Activated CD4-positive, alpha-beta T cell treated with anti-CD3 and anti-CD28 coated beads for 36 hours (primary cell): ENCODE measurements at regions of chr10 and their contacts with region 1.

Region 1: DNA sequence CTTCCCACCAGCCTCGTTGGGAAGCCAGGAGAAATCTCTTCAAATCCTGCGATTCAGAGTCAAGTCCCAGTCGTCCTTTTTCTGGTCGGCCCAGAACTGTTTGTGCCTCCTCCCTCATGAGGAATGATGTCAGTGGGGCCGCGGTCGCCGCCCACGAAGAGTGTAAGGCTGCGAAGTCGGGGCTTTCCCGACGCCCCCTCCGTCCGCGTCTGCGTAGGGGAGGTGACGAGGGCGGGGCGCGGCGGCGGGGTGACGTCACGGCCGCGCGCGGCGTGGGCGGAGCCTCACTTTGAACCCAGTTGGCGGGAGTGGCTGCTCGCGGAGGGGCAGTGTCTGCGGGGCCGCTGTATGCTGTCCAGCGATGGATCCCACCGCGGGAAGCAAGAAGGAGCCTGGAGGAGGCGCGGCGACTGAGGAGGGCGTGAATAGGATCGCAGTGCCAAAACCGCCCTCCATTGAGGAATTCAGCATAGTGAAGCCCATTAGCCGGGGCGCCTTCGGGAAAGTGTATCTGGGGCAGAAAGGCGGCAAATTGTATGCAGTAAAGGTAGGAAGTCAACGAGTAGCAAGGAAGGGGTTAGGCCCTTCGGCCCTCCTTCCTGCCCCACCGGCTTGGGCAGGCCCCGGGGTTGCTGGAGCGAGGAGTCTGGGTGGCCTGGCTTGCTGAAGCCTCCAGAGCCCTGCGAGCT is at the start of gene MASTL:
- DNase-seq: peak; percentile 97
- ATAC-seq: peak; percentile 77
- H3K4me3 Mint-ChIP-seq: peak within 1 kb of the TSS; percentile 94
- H3K27ac Mint-ChIP-seq: peak within 1 kb of the TSS; percentile 99
- H3K4me1 Mint-ChIP-seq: peaks cover 34% of the 10 kb centered on the region
- H3K27me3 Mint-ChIP-seq: no peaks in the 10 kb centered on the region
- total RNA-seq, gene MASTL: 42.1 to 55.3 TPM

Region 2: GRCh38 chr10:26437637-26438461 is 717.4 kb before region 1 on chr10 and contains the start of gene APBB1IP:
- CTCF ChIA-PET with region 1: no interaction called
- POLR2A ChIA-PET with region 1: no interaction called
- intact Hi-C with region 1: loop called in 1 of 2 experiments (anchors 5 kb)
- DNase-seq: peak; percentile 73
- ATAC-seq: peak; percentile 56
- H3K4me3 Mint-ChIP-seq: peak within 1 kb of the TSS; percentile 89
- H3K27ac Mint-ChIP-seq: peak within 1 kb of the TSS; percentile 97
- H3K4me1 Mint-ChIP-seq: peaks cover 49% of the 10 kb centered on the region
- H3K27me3 Mint-ChIP-seq: no peaks in the 10 kb centered on the region
- total RNA-seq, gene APBB1IP: 53.3 to 66.4 TPM

Region 3: GRCh38 chr10:26860443-26861204 is 294.6 kb before region 1 on chr10 and contains the start of gene ABI1:
- CTCF ChIA-PET with region 1: interaction called, 7 read pairs
- POLR2A ChIA-PET with region 1: no interaction called
- intact Hi-C with region 1: loop called (anchors 1 kb)
- DNase-seq: peak; percentile 99
- ATAC-seq: peak; percentile 95
- H3K4me3 Mint-ChIP-seq: peak within 1 kb of the TSS; percentile 98
- H3K27ac Mint-ChIP-seq: peak within 1 kb of the TSS; percentile 98
- H3K4me1 Mint-ChIP-seq: peaks cover 30% of the 10 kb centered on the region
- H3K27me3 Mint-ChIP-seq: no peaks in the 10 kb centered on the region
- total RNA-seq, gene ABI1: 44.2 to 56.6 TPM

Region 4: GRCh38 chr10:26969145-26969926 is 185.9 kb before region 1 on chr10:
- CTCF ChIA-PET with region 1: no interaction called
- POLR2A ChIA-PET with region 1: no interaction called
- intact Hi-C with region 1: no loop called
- DNase-seq: peak; percentile 24
- ATAC-seq: peak; percentile 88
- H3K4me3 Mint-ChIP-seq: no peak overlapping the region
- H3K27ac Mint-ChIP-seq: no peak overlapping the region
- H3K4me1 Mint-ChIP-seq: peaks cover 16% of the 10 kb centered on the region
- H3K27me3 Mint-ChIP-seq: no peaks in the 10 kb centered on the region

Region 5: GRCh38 chr10:27241652-27242472 is 86.7 kb after region 1 on chr10:
- CTCF ChIA-PET with region 1: interaction called, 3 read pairs
- POLR2A ChIA-PET with region 1: interaction called, 10 read pairs
- intact Hi-C with region 1: loop called (anchors 1 kb)
- DNase-seq: peak; percentile 94
- ATAC-seq: peak; percentile 71
- H3K4me3 Mint-ChIP-seq: peak overlapping the region; percentile 98
- H3K27ac Mint-ChIP-seq: peak overlapping the region; percentile 100
- H3K4me1 Mint-ChIP-seq: peaks cover 28% of the 10 kb centered on the region
- H3K27me3 Mint-ChIP-seq: no peaks in the 10 kb centered on the region

Region 6: GRCh38 chr10:27914888-27915287 is 759.7 kb after region 1 on chr10:
- CTCF ChIA-PET with region 1: no interaction called
- POLR2A ChIA-PET with region 1: no interaction called
- intact Hi-C with region 1: no loop called
- DNase-seq: no peak
- ATAC-seq: no peak
- H3K4me3 Mint-ChIP-seq: no peak overlapping the region
- H3K27ac Mint-ChIP-seq: no peak overlapping the region
- H3K4me1 Mint-ChIP-seq: no peaks in the 10 kb centered on the region
- H3K27me3 Mint-ChIP-seq: peaks cover 7% of the 10 kb centered on the region

Region 7: GRCh38 chr10:28291881-28292297 is 1136.7 kb after region 1 on chr10:
- CTCF ChIA-PET with region 1: no interaction called
- POLR2A ChIA-PET with region 1: no interaction called
- intact Hi-C with region 1: loop called in 1 of 2 experiments (anchors 10 kb)
- DNase-seq: peak; percentile 80
- ATAC-seq: peak; percentile 97
- H3K4me3 Mint-ChIP-seq: no peak overlapping the region
- H3K27ac Mint-ChIP-seq: peak overlapping the region; percentile 72
- H3K4me1 Mint-ChIP-seq: peaks cover 56% of the 10 kb centered on the region
- H3K27me3 Mint-ChIP-seq: no peaks in the 10 kb centered on the region

Region 8: GRCh38 chr10:28532383-28533175 is 1377.4 kb after region 1 on chr10 and contains the start of gene WAC:
- CTCF ChIA-PET with region 1: no interaction called
- POLR2A ChIA-PET with region 1: no interaction called
- intact Hi-C with region 1: loop called in 1 of 2 experiments (anchors 2 kb)
- DNase-seq: peak; percentile 99
- ATAC-seq: peak; percentile 88
- H3K4me3 Mint-ChIP-seq: peak within 1 kb of the TSS; percentile 95
- H3K27ac Mint-ChIP-seq: peak within 1 kb of the TSS; percentile 100
- H3K4me1 Mint-ChIP-seq: peaks cover 56% of the 10 kb centered on the region
- H3K27me3 Mint-ChIP-seq: no peaks in the 10 kb centered on the region
- total RNA-seq, gene WAC: 103 to 136 TPM